CD4-positive, alpha-beta memory T cell (primary cell): ENCODE measurements at regions of chr21 and their contacts with region 1.

Region 1: GRCh38 chr21:43718872-43719747 is at the start of gene PDXK:
- DNase-seq: peak; percentile 79 to 85 (median 83)
- H3K4me3 ChIP-seq: peak within 1 kb of the TSS; percentile 62 to 86
- H3K4me3 Mint-ChIP-seq: peak within 1 kb of the TSS; percentile 83 to 90 (median 85)
- H3K27ac ChIP-seq: peak within 1 kb of the TSS; percentile 75
- H3K27ac Mint-ChIP-seq: peak within 1 kb of the TSS; percentile 65 to 91 (median 87)
- H3K4me1 ChIP-seq: peaks cover 28% of the 10 kb centered on the region
- H3K4me1 Mint-ChIP-seq: peaks cover 10 to 35% (median 24%) of the 10 kb centered on the region in 4 donors
- H3K27me3 ChIP-seq: no peaks in the 10 kb centered on the region
- H3K27me3 Mint-ChIP-seq: no peaks in the 10 kb centered on the region
- total RNA-seq, gene PDXK: 90.8 to 94.3 TPM

Region 2: DNA sequence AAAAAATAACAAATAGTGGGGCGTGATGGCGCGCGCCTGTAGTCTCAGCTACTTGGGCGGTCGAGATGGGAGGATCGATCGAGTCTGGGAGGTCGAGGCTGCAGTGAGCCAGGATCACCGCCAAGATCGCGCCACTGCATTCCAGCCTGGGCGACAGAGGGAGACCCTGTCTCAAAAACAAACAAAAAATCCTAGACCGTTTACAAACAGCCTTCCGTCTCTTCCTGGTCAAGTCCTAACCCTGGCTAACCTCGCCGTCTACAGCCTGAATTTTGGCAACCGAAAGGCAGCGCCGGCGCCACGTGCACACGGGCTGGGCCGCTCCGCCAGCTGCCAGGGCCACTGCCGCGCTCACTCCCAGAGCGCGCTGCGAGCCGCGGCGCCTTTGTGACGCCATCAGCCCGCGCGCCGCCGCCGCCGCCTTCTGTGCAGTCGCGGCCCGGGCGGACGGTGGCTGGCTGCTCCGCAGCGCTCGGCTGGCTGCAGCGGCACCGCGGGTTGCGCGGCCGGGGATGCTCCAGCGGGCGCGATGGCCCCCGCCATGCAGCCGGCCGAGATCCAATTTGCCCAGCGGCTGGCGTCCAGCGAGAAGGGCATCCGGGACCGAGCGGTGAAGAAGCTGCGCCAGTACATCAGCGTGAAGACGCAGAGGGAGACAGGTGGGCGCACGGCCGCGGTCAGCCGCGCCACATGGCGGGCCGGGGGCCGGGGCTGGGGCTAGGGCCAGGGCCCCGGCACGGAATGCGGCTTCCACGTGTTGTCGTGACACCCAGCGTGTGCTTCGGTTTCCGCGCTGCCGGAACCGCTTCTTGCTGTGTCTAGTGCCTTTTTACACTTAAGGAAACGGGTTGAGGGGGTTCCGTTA is 59.7 kb before region 1 on chr21 and contains the starts of genes HSF2BP and RRP1B:
- CTCF ChIA-PET with region 1: no interaction called
- POLR2A ChIA-PET with region 1: interaction called, 9 read pairs
- intact Hi-C with region 1: loop called (anchors 1 kb)
- DNase-seq: peak; percentile 77 to 86 (median 83)
- H3K4me3 ChIP-seq: peak within 1 kb of the TSS; percentile 83 to 93
- H3K4me3 Mint-ChIP-seq: peak within 1 kb of the TSS; percentile 85 to 97 (median 95)
- H3K27ac ChIP-seq: peak within 1 kb of the TSS; percentile 88
- H3K27ac Mint-ChIP-seq: peak within 1 kb of the TSS; percentile 92 to 99 (median 96)
- H3K4me1 ChIP-seq: peaks cover 33% of the 10 kb centered on the region
- H3K4me1 Mint-ChIP-seq: peaks cover 26 to 40% (median 35%) of the 10 kb centered on the region in 4 donors
- H3K27me3 ChIP-seq: no peaks in the 10 kb centered on the region
- H3K27me3 Mint-ChIP-seq: no peaks in the 10 kb centered on the region
- total RNA-seq, gene HSF2BP: 0.39 to 0.70 TPM
- total RNA-seq, gene RRP1B: 39.9 to 40.5 TPM

Region 3: GRCh38 chr21:43741425-43742096 is 22.5 kb after region 1 on chr21:
- CTCF ChIA-PET with region 1: no interaction called
- POLR2A ChIA-PET with region 1: no interaction called
- intact Hi-C with region 1: no loop called
- DNase-seq: no peak
- H3K4me3 ChIP-seq: no peak overlapping the region
- H3K4me3 Mint-ChIP-seq: no peak overlapping the region
- H3K27ac ChIP-seq: no peak overlapping the region
- H3K27ac Mint-ChIP-seq: peak overlapping the region in 1 of 7 donors; percentile 58
- H3K4me1 ChIP-seq: no peaks in the 10 kb centered on the region
- H3K4me1 Mint-ChIP-seq: peaks cover 0 to 8% (median 2%) of the 10 kb centered on the region in 4 donors
- H3K27me3 ChIP-seq: no peaks in the 10 kb centered on the region
- H3K27me3 Mint-ChIP-seq: no peaks in the 10 kb centered on the region

Region 4: GRCh38 chr21:43758111-43758641 is 39.1 kb after region 1 on chr21:
- CTCF ChIA-PET with region 1: no interaction called
- POLR2A ChIA-PET with region 1: no interaction called
- intact Hi-C with region 1: no loop called
- DNase-seq: no peak
- H3K4me3 ChIP-seq: no peak overlapping the region
- H3K4me3 Mint-ChIP-seq: no peak overlapping the region
- H3K27ac ChIP-seq: no peak overlapping the region
- H3K27ac Mint-ChIP-seq: no peak overlapping the region
- H3K4me1 ChIP-seq: no peaks in the 10 kb centered on the region
- H3K4me1 Mint-ChIP-seq: no peaks in the 10 kb centered on the region
- H3K27me3 ChIP-seq: no peaks in the 10 kb centered on the region
- H3K27me3 Mint-ChIP-seq: no peaks in the 10 kb centered on the region

Region 5: GRCh38 chr21:43775795-43776430 is 56.8 kb after region 1 on chr21 and contains the start of gene CSTB:
- CTCF ChIA-PET with region 1: no interaction called
- POLR2A ChIA-PET with region 1: interaction called, 3 read pairs
- intact Hi-C with region 1: loop called (anchors 5 kb)
- DNase-seq: peak; percentile 69 to 88 (median 77)
- H3K4me3 ChIP-seq: peak within 1 kb of the TSS; percentile 79 to 93
- H3K4me3 Mint-ChIP-seq: peak within 1 kb of the TSS; percentile 91 to 97 (median 93)
- H3K27ac ChIP-seq: peak within 1 kb of the TSS; percentile 76
- H3K27ac Mint-ChIP-seq: peak within 1 kb of the TSS; percentile 84 to 92 (median 87)
- H3K4me1 ChIP-seq: peaks cover 31% of the 10 kb centered on the region
- H3K4me1 Mint-ChIP-seq: peaks cover 23 to 55% (median 34%) of the 10 kb centered on the region in 4 donors
- H3K27me3 ChIP-seq: no peaks in the 10 kb centered on the region
- H3K27me3 Mint-ChIP-seq: no peaks in the 10 kb centered on the region
- total RNA-seq, gene CSTB: 46.0 to 48.8 TPM